ENCODE measurements at regions of chrX and their contacts with region 1.

Region 1: DNA sequence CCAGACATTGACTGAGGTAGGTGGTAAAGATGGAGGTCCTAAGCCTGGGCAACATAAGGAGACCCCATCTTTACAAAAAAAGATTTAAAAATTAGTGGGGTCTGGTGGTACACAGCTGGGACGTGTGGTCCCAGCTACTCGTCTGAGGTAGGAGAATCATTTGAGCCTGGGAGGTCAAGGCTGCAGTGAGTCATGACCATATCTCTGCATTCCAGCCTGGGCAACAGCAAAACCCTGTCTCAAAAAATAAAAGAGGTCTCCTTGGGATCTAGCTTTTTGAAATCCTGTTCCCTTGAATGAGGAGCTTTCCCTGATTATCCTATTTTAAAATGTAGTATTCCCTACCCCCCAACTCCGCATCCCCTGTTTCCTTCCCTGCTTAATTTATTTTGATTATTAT is 78.7 kb upstream of the OGT start:
- DNase-seq: no peak
- ATAC-seq: no peak
- H3K4me3 Mint-ChIP-seq: no peak overlapping the region
- H3K27ac Mint-ChIP-seq: no peak overlapping the region
- H3K4me1 Mint-ChIP-seq: no peaks in the 10 kb centered on the region
- H3K27me3 Mint-ChIP-seq: no peaks in the 10 kb centered on the region

Region 2: DNA sequence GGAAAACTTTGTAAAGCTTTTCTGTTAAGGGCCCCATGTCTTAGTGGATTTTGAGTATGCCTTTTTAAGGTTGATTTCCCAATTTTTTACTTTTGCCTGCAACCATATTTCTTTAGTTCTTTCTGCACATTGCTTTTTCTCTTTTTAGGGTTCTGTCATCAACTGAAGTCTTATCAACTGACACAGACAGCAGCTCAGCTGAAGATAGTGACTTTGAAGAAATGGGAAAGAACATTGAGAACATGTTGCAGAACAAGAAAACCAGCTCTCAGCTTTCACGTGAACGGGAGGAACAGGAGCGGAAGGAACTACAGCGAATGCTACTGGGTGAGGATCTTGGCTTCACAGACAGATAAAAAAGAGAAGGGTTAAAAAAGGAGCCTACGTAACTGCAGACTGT is 60.3 kb before region 1 on chrX:
- CTCF ChIA-PET with region 1: no interaction called
- POLR2A ChIA-PET with region 1: interaction called, 10 read pairs
- DNase-seq: no peak
- ATAC-seq: no peak
- H3K4me3 Mint-ChIP-seq: no peak overlapping the region
- H3K27ac Mint-ChIP-seq: no peak overlapping the region
- H3K4me1 Mint-ChIP-seq: no peaks in the 10 kb centered on the region
- H3K27me3 Mint-ChIP-seq: no peaks in the 10 kb centered on the region

Measured in activated CD8-positive, alpha-beta T cell treated with anti-CD3 and anti-CD28 coated beads, Interleukin-2, amount 10 ng/mL, durations not matched to agents 7 days and 5 days (primary cell).